ENCODE measurements at regions of chr20 and their contacts with region 1.

Region 1: GRCh38 chr20:49046087-49046900 is at the start of gene CSE1L:
- DNase-seq: peak; percentile 96
- H3K4me3 Mint-ChIP-seq: peak within 1 kb of the TSS; percentile 99
- H3K27ac Mint-ChIP-seq: peak within 1 kb of the TSS; percentile 99
- H3K4me1 Mint-ChIP-seq: peaks cover 33% of the 10 kb centered on the region
- H3K27me3 Mint-ChIP-seq: no peaks in the 10 kb centered on the region
- total RNA-seq, gene CSE1L: 107 to 109 TPM

Region 2: GRCh38 chr20:48921151-48921898 is 125.0 kb before region 1 on chr20 and contains the start of gene ARFGEF2:
- CTCF ChIA-PET with region 1: interaction called, 3 read pairs
- POLR2A ChIA-PET with region 1: interaction called, 4 read pairs
- intact Hi-C with region 1: loop called (anchors 5 kb)
- DNase-seq: peak; percentile 96
- H3K4me3 Mint-ChIP-seq: peak within 1 kb of the TSS; percentile 91
- H3K27ac Mint-ChIP-seq: peak within 1 kb of the TSS; percentile 90
- H3K4me1 Mint-ChIP-seq: peaks cover 47% of the 10 kb centered on the region
- H3K27me3 Mint-ChIP-seq: no peaks in the 10 kb centered on the region
- total RNA-seq, gene ARFGEF2: 21.9 to 22.1 TPM

Region 3: DNA sequence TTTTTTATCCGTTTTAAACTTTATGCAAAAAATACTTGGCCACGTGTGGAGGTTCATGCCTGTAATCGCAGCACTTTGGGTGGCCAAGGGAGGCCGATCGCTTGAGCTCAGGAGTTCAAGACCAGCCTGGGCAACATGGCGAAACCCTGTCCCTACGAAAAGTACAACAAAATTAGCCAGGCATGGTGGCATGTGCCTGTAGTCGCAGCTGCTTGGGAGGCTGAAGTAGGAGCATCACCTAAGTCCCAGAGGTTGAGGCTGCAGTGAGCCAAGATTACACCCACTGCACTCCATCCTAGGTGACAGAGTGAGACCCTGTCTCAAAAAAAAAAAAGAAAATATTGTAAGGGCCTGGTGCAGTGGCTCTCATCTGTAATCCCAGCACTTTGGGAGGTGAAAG is 44.8 kb after region 1 on chr20:
- CTCF ChIA-PET with region 1: no interaction called
- POLR2A ChIA-PET with region 1: no interaction called
- intact Hi-C with region 1: no loop called
- DNase-seq: no peak
- H3K4me3 Mint-ChIP-seq: no peak overlapping the region
- H3K27ac Mint-ChIP-seq: no peak overlapping the region
- H3K4me1 Mint-ChIP-seq: no peaks in the 10 kb centered on the region
- H3K27me3 Mint-ChIP-seq: no peaks in the 10 kb centered on the region

Region 4: DNA sequence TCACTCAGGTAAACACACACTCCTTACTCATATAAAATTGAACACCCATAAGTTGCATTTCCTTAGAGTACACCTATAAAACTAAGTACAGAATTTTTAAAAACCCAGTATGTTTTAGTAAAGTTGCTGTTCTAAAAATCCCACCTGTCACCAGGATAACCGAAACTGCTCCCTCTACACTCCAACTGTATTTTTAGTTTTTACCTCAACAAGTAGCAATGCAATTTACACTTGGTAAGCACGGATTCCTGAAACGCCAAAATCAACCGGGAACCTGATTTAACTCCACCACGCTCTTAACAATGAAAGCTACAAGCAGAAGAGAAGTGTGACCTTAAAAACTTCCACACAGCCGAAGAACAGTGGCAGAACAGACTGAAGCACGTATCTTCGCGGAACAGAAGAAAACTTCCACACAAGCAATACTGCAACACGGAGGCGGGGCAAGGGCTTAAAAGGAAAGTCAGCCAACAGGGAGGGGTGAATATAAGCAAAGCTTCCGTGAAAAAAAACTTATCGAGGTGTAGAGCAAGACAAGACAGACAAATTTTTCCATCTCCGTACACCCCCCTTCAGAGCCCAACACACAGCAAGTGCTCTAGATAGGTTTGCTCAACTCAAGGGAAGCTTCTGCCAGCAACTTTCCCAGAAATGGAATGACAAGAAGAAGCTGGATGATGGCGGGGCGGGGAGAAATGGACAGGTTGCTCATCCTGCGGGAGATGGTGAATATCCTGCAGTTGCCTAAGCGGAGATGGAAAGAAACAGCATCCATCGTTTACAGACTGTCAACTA is 140.4 kb after region 1 on chr20:
- CTCF ChIA-PET with region 1: no interaction called
- POLR2A ChIA-PET with region 1: interaction called, 5 read pairs
- intact Hi-C with region 1: loop called (anchors 1 kb)
- DNase-seq: peak; percentile 79
- H3K4me3 Mint-ChIP-seq: peak overlapping the region; percentile 87
- H3K27ac Mint-ChIP-seq: peak overlapping the region; percentile 89
- H3K4me1 Mint-ChIP-seq: peaks cover 48% of the 10 kb centered on the region
- H3K27me3 Mint-ChIP-seq: no peaks in the 10 kb centered on the region